Activated CD4-positive, alpha-beta memory T cell treated with anti-CD3 and anti-CD28 coated beads for 36 hours (primary cell): ENCODE measurements at regions of chr12 and their contacts with region 1.

Region 1: GRCh38 chr12:101830367-101831325 is at the start of gene GNPTAB:
- DNase-seq: peak; percentile 97
- H3K4me3 Mint-ChIP-seq: peak within 1 kb of the TSS; percentile 96
- H3K27ac Mint-ChIP-seq: peak within 1 kb of the TSS; percentile 81
- H3K4me1 Mint-ChIP-seq: peaks cover 36% of the 10 kb centered on the region
- H3K27me3 Mint-ChIP-seq: no peaks in the 10 kb centered on the region
- total RNA-seq, gene GNPTAB: 19.6 to 20.2 TPM

Region 2: DNA sequence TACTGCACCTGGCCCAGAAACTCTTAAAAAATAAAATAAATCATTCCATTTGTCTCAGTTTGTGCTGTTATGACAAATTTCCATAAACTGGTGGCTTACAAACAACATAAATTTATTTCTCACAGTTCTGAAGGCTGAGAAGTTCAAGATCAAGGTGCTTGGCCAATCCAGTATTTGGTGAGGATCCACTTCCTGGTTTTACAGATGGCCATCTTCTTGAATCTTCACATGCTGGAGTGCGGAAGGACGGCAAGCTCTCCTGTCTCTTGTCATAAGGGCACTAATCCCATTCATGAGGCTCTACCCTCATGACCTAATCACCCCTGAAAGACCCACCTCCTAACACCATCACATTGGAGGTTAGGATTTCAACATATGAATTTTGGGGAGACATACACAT is 265.7 kb before region 1 on chr12:
- CTCF ChIA-PET with region 1: no interaction called
- POLR2A ChIA-PET with region 1: no interaction called
- intact Hi-C with region 1: loop called (anchors 10 kb)
- DNase-seq: no peak
- H3K4me3 Mint-ChIP-seq: no peak overlapping the region
- H3K27ac Mint-ChIP-seq: no peak overlapping the region
- H3K4me1 Mint-ChIP-seq: peaks cover 4% of the 10 kb centered on the region
- H3K27me3 Mint-ChIP-seq: peaks cover 10% of the 10 kb centered on the region

Region 3: GRCh38 chr12:101773650-101774162 is 56.9 kb before region 1 on chr12:
- CTCF ChIA-PET with region 1: interaction called, 155 read pairs
- POLR2A ChIA-PET with region 1: interaction called, 5 read pairs
- intact Hi-C with region 1: loop called (anchors 1 kb)
- DNase-seq: peak; percentile 72
- H3K4me3 Mint-ChIP-seq: no peak overlapping the region
- H3K27ac Mint-ChIP-seq: no peak overlapping the region
- H3K4me1 Mint-ChIP-seq: peaks cover 6% of the 10 kb centered on the region
- H3K27me3 Mint-ChIP-seq: no peaks in the 10 kb centered on the region

Region 4: GRCh38 chr12:101792051-101792931 is 38.4 kb before region 1 on chr12:
- CTCF ChIA-PET with region 1: interaction called, 64 read pairs
- POLR2A ChIA-PET with region 1: interaction called, 8 read pairs
- intact Hi-C with region 1: loop called (anchors 1 kb)
- DNase-seq: no peak
- H3K4me3 Mint-ChIP-seq: no peak overlapping the region
- H3K27ac Mint-ChIP-seq: no peak overlapping the region
- H3K4me1 Mint-ChIP-seq: peaks cover 17% of the 10 kb centered on the region
- H3K27me3 Mint-ChIP-seq: no peaks in the 10 kb centered on the region

Region 5: DNA sequence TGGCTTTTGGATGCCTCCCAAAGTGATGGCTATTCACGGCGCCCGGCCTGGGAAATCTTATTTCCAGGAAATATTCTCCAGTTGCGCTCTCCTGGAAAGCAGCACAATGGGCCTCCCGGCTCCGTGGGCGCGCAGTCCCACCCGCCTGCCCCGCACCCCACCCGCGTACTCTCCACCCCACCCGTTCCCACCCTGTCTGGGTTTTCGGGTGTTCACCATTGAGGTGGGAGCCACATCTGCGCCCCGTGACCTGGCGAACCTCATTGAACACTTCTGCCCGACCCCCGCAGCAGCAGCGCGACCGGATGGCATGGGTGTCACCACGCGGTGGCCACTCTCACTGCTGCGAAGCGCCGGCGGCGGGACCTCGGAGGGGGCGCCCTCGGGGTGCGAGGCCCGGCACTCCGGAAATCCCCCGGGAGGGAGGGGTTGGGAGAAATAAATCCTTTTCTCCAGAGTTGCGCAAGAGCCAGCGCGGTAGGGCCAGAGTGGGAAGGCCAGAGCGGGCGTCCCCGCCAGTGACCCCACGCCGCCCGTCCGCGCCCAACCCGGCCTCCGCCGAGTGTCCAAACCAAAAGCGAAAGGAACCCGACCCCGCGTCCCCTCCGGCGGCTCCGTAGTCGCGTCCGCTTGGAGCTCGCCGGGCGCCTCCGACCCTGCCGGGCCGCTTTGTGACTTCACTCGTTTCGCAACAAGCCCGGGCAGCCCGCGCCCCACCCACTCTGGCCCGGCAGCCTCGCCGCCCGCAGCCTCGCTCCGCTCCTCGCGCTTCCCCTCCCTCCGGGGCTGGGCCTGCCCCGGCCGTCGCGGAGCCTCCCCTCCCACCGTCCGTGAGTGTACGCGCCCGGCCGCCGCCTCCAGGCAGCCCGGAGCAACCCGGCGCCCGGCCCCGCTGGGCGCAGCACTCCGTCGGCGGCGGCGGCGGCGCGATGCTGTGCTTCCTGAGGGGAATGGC is 46.5 kb after region 1 on chr12 and contains the start of gene DRAM1:
- CTCF ChIA-PET with region 1: no interaction called
- POLR2A ChIA-PET with region 1: no interaction called
- intact Hi-C with region 1: loop called (anchors 1 kb)
- DNase-seq: peak; percentile 85
- H3K4me3 Mint-ChIP-seq: peak within 1 kb of the TSS; percentile 87
- H3K27ac Mint-ChIP-seq: peak within 1 kb of the TSS; percentile 48
- H3K4me1 Mint-ChIP-seq: peaks cover 8% of the 10 kb centered on the region
- H3K27me3 Mint-ChIP-seq: no peaks in the 10 kb centered on the region
- total RNA-seq, gene DRAM1: 2.6 to 2.8 TPM